ENCODE measurements at regions of chr2 and their contacts with region 1.

Region 1: GRCh38 chr2:241877989-241878970 is 8.8 kb downstream of the RTP5 start:
- DNase-seq: peak; percentile 63 to 89 (median 73)
- ATAC-seq: no peak
- H3K4me3 ChIP-seq: no peak overlapping the region
- H3K4me3 Mint-ChIP-seq: no peak overlapping the region
- H3K27ac ChIP-seq: no peak overlapping the region
- H3K27ac Mint-ChIP-seq: no peak overlapping the region
- H3K4me1 ChIP-seq: peaks cover 35% of the 10 kb centered on the region
- H3K4me1 Mint-ChIP-seq: peaks cover 30% of the 10 kb centered on the region
- H3K27me3 ChIP-seq: no peaks in the 10 kb centered on the region
- H3K27me3 Mint-ChIP-seq: no peaks in the 10 kb centered on the region
- CTCF ChIP-seq: peak; percentile 59

Region 2: DNA sequence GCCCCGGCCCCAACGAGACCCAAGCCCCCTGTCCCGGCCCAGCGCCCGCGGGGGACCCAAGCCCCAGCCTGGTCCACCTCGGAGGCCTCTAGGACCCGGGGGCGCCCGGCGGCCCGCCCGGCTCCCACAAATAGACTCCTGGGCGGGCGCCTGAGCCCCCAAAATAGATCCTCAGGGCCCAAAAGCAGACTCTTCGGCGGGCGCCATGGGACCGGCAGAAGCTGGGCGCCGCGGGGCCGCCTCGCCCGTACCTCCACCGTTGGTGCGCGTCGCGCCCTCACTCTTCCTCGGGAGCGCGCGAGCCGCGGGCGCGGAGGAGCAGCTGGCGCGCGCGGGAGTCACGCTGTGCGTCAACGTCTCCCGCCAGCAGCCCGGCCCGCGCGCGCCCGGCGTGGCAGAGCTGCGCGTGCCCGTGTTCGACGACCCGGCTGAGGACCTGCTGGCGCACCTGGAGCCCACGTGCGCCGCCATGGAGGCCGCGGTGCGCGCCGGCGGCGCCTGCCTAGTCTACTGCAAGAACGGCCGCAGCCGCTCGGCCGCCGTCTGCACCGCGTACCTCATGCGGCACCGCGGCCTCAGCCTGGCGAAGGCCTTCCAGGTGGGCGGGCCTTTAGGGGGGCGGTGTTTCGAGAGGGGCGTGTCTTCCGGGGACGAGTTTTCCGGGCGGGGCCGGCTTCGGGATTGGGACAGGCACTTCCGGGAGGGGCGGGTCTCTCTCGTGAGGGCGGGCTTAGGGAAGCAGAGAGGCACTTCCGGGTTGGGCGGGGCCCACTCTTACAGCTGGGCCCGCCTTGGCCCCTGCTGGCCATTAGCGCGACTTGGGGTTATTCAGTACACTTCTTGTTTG is 1317.6 kb before region 1 on chr2:
- CTCF ChIA-PET with region 1: no interaction called
- POLR2A ChIA-PET with region 1: no interaction called
- intact Hi-C with region 1: loop called in 1 of 2 experiments (anchors 10 kb)
- DNase-seq: peak in 13 of 14 experiments; percentile 99 to 100 (median 100)
- ATAC-seq: peak; percentile 50
- H3K4me3 ChIP-seq: peak overlapping the region; percentile 53
- H3K4me3 Mint-ChIP-seq: peak overlapping the region; percentile 90
- H3K27ac ChIP-seq: peak overlapping the region; percentile 62 to 95
- H3K27ac Mint-ChIP-seq: peak overlapping the region; percentile 98
- H3K4me1 ChIP-seq: peaks cover 87% of the 10 kb centered on the region
- H3K4me1 Mint-ChIP-seq: peaks cover 80% of the 10 kb centered on the region
- H3K27me3 ChIP-seq: no peaks in the 10 kb centered on the region
- H3K27me3 Mint-ChIP-seq: no peaks in the 10 kb centered on the region
- CTCF ChIP-seq: no peak

Region 3: DNA sequence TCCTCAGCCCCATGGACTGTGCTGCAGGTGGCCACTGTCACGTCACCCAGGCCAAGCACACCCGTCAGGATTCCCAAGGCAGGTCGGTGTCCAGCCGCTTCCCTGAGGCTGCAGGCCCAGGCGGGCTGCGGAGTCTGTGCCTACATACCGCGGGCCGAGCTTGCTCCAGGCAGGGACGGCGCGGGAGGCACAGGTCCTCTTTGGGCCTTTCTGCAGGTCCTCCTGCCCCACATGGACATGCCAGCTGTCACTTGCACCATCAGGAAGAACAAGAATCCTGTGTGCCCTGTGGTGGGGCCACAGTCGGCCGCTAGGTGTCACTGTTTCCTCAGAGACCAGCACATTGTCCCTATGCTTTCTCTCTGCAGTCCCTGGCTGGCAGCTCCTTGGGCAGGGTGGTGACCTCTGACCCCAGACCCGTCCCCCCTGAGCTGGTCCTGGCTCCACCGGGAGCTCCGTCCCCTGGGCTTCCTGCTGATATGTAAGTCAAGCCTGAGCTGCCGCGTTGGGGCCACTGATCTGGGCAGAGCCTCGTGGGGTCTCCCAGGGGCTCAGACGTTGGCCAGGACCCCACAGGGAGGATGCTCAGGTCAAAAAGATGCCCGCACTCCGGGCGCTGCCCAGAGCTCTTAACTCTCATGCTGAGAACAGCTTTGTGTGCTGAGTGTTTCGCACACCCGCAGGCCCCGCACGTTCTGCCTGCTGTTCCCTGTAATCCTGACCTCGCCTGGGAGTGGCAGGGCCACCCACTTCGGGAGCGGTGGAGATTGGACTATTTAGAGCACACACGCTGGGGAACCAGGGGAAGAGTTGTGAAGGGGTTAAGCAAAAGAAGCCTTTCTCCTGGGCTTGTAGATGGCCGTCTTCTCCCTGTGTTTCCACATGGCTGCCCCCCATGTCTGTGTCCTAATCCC is 1026.9 kb before region 1 on chr2:
- CTCF ChIA-PET with region 1: no interaction called
- POLR2A ChIA-PET with region 1: no interaction called
- intact Hi-C with region 1: loop called in 1 of 2 experiments (anchors 5 kb)
- DNase-seq: peak; percentile 72 to 90 (median 82)
- ATAC-seq: peak; percentile 97
- H3K4me3 ChIP-seq: no peak overlapping the region
- H3K4me3 Mint-ChIP-seq: no peak overlapping the region
- H3K27ac ChIP-seq: no peak overlapping the region
- H3K27ac Mint-ChIP-seq: no peak overlapping the region
- H3K4me1 ChIP-seq: no peaks in the 10 kb centered on the region
- H3K4me1 Mint-ChIP-seq: no peaks in the 10 kb centered on the region
- H3K27me3 ChIP-seq: no peaks in the 10 kb centered on the region
- H3K27me3 Mint-ChIP-seq: peaks cover 3% of the 10 kb centered on the region
- CTCF ChIP-seq: peak; percentile 88

Region 4: GRCh38 chr2:241355983-241356870 is 522.1 kb before region 1 on chr2 and contains the start of gene FARP2:
- CTCF ChIA-PET with region 1: no interaction called
- POLR2A ChIA-PET with region 1: no interaction called
- intact Hi-C with region 1: loop called in 1 of 2 experiments (anchors 2 kb)
- DNase-seq: peak; percentile 95 to 100 (median 97)
- ATAC-seq: peak; percentile 94
- H3K4me3 ChIP-seq: peak within 1 kb of the TSS; percentile 55
- H3K4me3 Mint-ChIP-seq: peak within 1 kb of the TSS; percentile 86
- H3K27ac ChIP-seq: peak within 1 kb of the TSS in 1 of 2 donors; percentile 20
- H3K27ac Mint-ChIP-seq: peak within 1 kb of the TSS; percentile 77
- H3K4me1 ChIP-seq: peaks cover 20% of the 10 kb centered on the region
- H3K4me1 Mint-ChIP-seq: peaks cover 28% of the 10 kb centered on the region
- H3K27me3 ChIP-seq: no peaks in the 10 kb centered on the region
- H3K27me3 Mint-ChIP-seq: no peaks in the 10 kb centered on the region
- CTCF ChIP-seq: no peak
- total RNA-seq, gene FARP2: 17.2 to 18.3 TPM

Region 5: GRCh38 chr2:241489733-241490680 is 388.3 kb before region 1 on chr2:
- CTCF ChIA-PET with region 1: no interaction called
- POLR2A ChIA-PET with region 1: no interaction called
- intact Hi-C with region 1: no loop called
- DNase-seq: no peak
- ATAC-seq: no peak
- H3K4me3 ChIP-seq: no peak overlapping the region
- H3K4me3 Mint-ChIP-seq: no peak overlapping the region
- H3K27ac ChIP-seq: no peak overlapping the region
- H3K27ac Mint-ChIP-seq: no peak overlapping the region
- H3K4me1 ChIP-seq: no peaks in the 10 kb centered on the region
- H3K4me1 Mint-ChIP-seq: no peaks in the 10 kb centered on the region
- H3K27me3 ChIP-seq: no peaks in the 10 kb centered on the region
- H3K27me3 Mint-ChIP-seq: no peaks in the 10 kb centered on the region
- CTCF ChIP-seq: no peak

Region 6: GRCh38 chr2:241617431-241618154 is 260.7 kb before region 1 on chr2:
- CTCF ChIA-PET with region 1: no interaction called
- POLR2A ChIA-PET with region 1: no interaction called
- intact Hi-C with region 1: loop called in 1 of 2 experiments (anchors 5 kb)
- DNase-seq: peak in 8 of 14 experiments; percentile 17 to 81 (median 44)
- ATAC-seq: peak; percentile 84
- H3K4me3 ChIP-seq: peak overlapping the region; percentile 61
- H3K4me3 Mint-ChIP-seq: peak overlapping the region; percentile 88
- H3K27ac ChIP-seq: peak overlapping the region; percentile 58 to 75
- H3K27ac Mint-ChIP-seq: peak overlapping the region; percentile 77
- H3K4me1 ChIP-seq: peaks cover 26% of the 10 kb centered on the region
- H3K4me1 Mint-ChIP-seq: peaks cover 30% of the 10 kb centered on the region
- H3K27me3 ChIP-seq: no peaks in the 10 kb centered on the region
- H3K27me3 Mint-ChIP-seq: no peaks in the 10 kb centered on the region
- CTCF ChIP-seq: no peak

Region 7: GRCh38 chr2:241686649-241687425 is 191.4 kb before region 1 on chr2 and contains the start of gene DTYMK:
- CTCF ChIA-PET with region 1: interaction called, 4 read pairs
- POLR2A ChIA-PET with region 1: interaction called, 7 read pairs
- intact Hi-C with region 1: loop called in 1 of 2 experiments (anchors 5 kb)
- DNase-seq: peak; percentile 89 to 98 (median 95)
- ATAC-seq: peak; percentile 90
- H3K4me3 ChIP-seq: peak within 1 kb of the TSS; percentile 84
- H3K4me3 Mint-ChIP-seq: peak within 1 kb of the TSS; percentile 95
- H3K27ac ChIP-seq: peak within 1 kb of the TSS; percentile 60 to 85
- H3K27ac Mint-ChIP-seq: peak within 1 kb of the TSS; percentile 84
- H3K4me1 ChIP-seq: peaks cover 37% of the 10 kb centered on the region
- H3K4me1 Mint-ChIP-seq: peaks cover 38% of the 10 kb centered on the region
- H3K27me3 ChIP-seq: no peaks in the 10 kb centered on the region
- H3K27me3 Mint-ChIP-seq: no peaks in the 10 kb centered on the region
- CTCF ChIP-seq: no peak
- total RNA-seq, gene DTYMK: 4.8 to 6.0 TPM

Region 8: GRCh38 chr2:241734467-241735208 is 143.6 kb before region 1 on chr2 and contains the start of gene D2HGDH:
- CTCF ChIA-PET with region 1: interaction called, 4 read pairs
- POLR2A ChIA-PET with region 1: interaction called, 9 read pairs
- intact Hi-C with region 1: loop called (anchors 1 kb)
- DNase-seq: peak; percentile 86 to 98 (median 94)
- ATAC-seq: peak; percentile 92
- H3K4me3 ChIP-seq: peak within 1 kb of the TSS; percentile 71
- H3K4me3 Mint-ChIP-seq: peak within 1 kb of the TSS; percentile 85
- H3K27ac ChIP-seq: peak within 1 kb of the TSS in 1 of 2 donors; percentile 71
- H3K27ac Mint-ChIP-seq: peak within 1 kb of the TSS; percentile 65
- H3K4me1 ChIP-seq: peaks cover 48% of the 10 kb centered on the region
- H3K4me1 Mint-ChIP-seq: peaks cover 12% of the 10 kb centered on the region
- H3K27me3 ChIP-seq: no peaks in the 10 kb centered on the region
- H3K27me3 Mint-ChIP-seq: no peaks in the 10 kb centered on the region
- CTCF ChIP-seq: no peak
- total RNA-seq, gene D2HGDH: 27.6 to 30.6 TPM

Region 9: GRCh38 chr2:241926541-241927311 is 48.4 kb after region 1 on chr2:
- CTCF ChIA-PET with region 1: no interaction called
- POLR2A ChIA-PET with region 1: no interaction called
- intact Hi-C with region 1: no loop called
- DNase-seq: no peak
- ATAC-seq: no peak
- H3K4me3 ChIP-seq: no peak overlapping the region
- H3K4me3 Mint-ChIP-seq: no peak overlapping the region
- H3K27ac ChIP-seq: no peak overlapping the region
- H3K27ac Mint-ChIP-seq: no peak overlapping the region
- H3K4me1 ChIP-seq: peaks cover 6% of the 10 kb centered on the region
- H3K4me1 Mint-ChIP-seq: peaks cover 26% of the 10 kb centered on the region
- H3K27me3 ChIP-seq: no peaks in the 10 kb centered on the region
- H3K27me3 Mint-ChIP-seq: no peaks in the 10 kb centered on the region
- CTCF ChIP-seq: no peak

Measured in CD4-positive, alpha-beta T cell (primary cell).